ENCODE measurements at regions of chr1 and their contacts with region 1.

Region 1: GRCh38 chr1:186212544-186213226 is 162.4 kb downstream of the TPR start:
- DNase-seq: peak; percentile 91
- H3K4me3 Mint-ChIP-seq: no peak overlapping the region
- H3K27ac Mint-ChIP-seq: peak overlapping the region; percentile 35
- H3K4me1 Mint-ChIP-seq: peaks cover 8% of the 10 kb centered on the region
- H3K27me3 Mint-ChIP-seq: no peaks in the 10 kb centered on the region
- CTCF ChIP-seq: peak; percentile 99

Region 2: GRCh38 chr1:185238447-185238846 is 974.2 kb before region 1 on chr1:
- CTCF ChIA-PET with region 1: no interaction called
- POLR2A ChIA-PET with region 1: no interaction called
- intact Hi-C with region 1: loop called (anchors 10 kb)
- DNase-seq: peak; percentile 24
- H3K4me3 Mint-ChIP-seq: no peak overlapping the region
- H3K27ac Mint-ChIP-seq: no peak overlapping the region
- H3K4me1 Mint-ChIP-seq: no peaks in the 10 kb centered on the region
- H3K27me3 Mint-ChIP-seq: no peaks in the 10 kb centered on the region
- CTCF ChIP-seq: peak; percentile 25

Region 3: GRCh38 chr1:185813401-185813979 is 399.2 kb before region 1 on chr1:
- CTCF ChIA-PET with region 1: interaction called, 18 read pairs
- POLR2A ChIA-PET with region 1: interaction called, 4 read pairs
- intact Hi-C with region 1: loop called (anchors 1 kb)
- DNase-seq: peak; percentile 80
- H3K4me3 Mint-ChIP-seq: no peak overlapping the region
- H3K27ac Mint-ChIP-seq: no peak overlapping the region
- H3K4me1 Mint-ChIP-seq: no peaks in the 10 kb centered on the region
- H3K27me3 Mint-ChIP-seq: no peaks in the 10 kb centered on the region
- CTCF ChIP-seq: peak; percentile 68

Region 4: GRCh38 chr1:186155594-186155993 is 57.1 kb before region 1 on chr1:
- CTCF ChIA-PET with region 1: interaction called, 73 read pairs
- POLR2A ChIA-PET with region 1: interaction called, 4 read pairs
- intact Hi-C with region 1: loop called (anchors 1 kb)
- DNase-seq: peak; percentile 83
- H3K4me3 Mint-ChIP-seq: no peak overlapping the region
- H3K27ac Mint-ChIP-seq: no peak overlapping the region
- H3K4me1 Mint-ChIP-seq: peaks cover 13% of the 10 kb centered on the region
- H3K27me3 Mint-ChIP-seq: no peaks in the 10 kb centered on the region
- CTCF ChIP-seq: peak; percentile 57

Region 5: DNA sequence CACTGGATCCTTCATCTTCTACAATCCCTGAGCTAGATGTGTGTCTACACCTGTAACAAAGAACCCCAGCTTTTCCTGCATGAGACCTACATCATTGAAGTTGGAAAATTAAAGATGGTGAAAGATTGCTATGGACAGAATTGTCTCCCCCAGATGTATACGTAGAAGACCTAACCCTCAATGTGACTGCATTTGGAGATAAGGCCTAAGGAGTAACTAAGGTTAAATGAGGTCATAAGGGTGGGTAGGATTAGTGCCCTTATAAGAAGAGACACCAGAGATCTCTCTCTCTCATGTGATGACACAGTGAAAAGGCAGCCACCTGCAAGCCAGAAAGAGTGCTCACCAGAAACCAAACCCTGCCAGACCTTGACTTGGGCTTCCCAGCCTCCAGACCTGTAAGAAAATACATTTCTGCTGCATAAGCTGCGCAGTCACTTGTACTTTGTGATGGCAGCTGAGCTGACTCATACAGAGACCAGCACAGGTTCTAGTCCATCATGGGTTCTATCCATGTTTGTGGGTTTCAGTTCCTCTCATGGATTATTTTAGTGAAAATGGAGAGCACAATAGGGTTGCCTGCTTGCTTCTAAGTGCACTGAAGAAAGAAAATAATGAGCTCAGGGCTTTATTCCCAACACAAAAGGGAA is 18.5 kb before region 1 on chr1:
- CTCF ChIA-PET with region 1: interaction called, 27 read pairs
- POLR2A ChIA-PET with region 1: no interaction called
- intact Hi-C with region 1: no loop called
- DNase-seq: no peak
- H3K4me3 Mint-ChIP-seq: no peak overlapping the region
- H3K27ac Mint-ChIP-seq: no peak overlapping the region
- H3K4me1 Mint-ChIP-seq: peaks cover 4% of the 10 kb centered on the region
- H3K27me3 Mint-ChIP-seq: no peaks in the 10 kb centered on the region
- CTCF ChIP-seq: no peak

Measured in MCF 10A (cell line).